ENCODE measurements at regions of chr17 and their contacts with region 1.

Region 1: DNA sequence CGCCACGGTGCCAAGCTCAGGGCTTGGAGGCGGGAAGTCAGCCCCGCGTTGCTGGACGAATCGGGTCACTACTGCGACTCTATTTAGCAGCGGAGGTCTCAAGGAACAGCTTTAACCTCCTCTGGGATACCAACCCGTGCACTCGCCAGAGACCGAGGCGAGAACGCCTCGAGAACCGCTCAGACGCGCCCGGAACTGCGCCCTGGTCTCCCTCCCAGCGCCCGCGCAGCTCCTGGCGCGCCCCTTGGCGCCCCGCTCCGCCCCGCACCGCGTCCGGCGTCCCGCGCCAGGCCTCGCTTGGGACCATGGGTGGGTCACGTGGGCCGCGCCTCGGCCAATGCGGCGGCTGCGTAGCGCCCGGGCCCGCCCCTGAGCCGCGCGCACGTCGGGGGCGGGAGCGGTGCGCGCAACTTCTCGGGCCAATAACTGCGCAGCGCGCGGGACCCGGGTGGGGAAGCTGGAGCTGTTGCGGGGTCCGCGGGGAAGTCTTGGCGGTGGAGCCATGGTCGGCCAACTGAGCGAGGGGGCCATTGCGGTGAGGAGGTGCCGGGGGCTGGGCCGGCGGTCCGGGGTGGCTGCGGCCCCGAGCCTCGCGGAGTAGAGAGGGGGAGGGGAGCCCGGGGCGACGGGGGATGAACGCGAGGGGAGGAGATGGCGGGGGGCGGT is at the starts of genes RPA1 and SMYD4:
- DNase-seq: peak; percentile 89
- H3K4me3 Mint-ChIP-seq: peak within 1 kb of the TSS; percentile 93
- H3K27ac Mint-ChIP-seq: peak within 1 kb of the TSS; percentile 85
- H3K4me1 Mint-ChIP-seq: peaks cover 61% of the 10 kb centered on the region
- H3K27me3 Mint-ChIP-seq: no peaks in the 10 kb centered on the region
- total RNA-seq, gene RPA1: 177 to 188 TPM
- total RNA-seq, gene SMYD4: 18.7 to 22.0 TPM

Region 2: DNA sequence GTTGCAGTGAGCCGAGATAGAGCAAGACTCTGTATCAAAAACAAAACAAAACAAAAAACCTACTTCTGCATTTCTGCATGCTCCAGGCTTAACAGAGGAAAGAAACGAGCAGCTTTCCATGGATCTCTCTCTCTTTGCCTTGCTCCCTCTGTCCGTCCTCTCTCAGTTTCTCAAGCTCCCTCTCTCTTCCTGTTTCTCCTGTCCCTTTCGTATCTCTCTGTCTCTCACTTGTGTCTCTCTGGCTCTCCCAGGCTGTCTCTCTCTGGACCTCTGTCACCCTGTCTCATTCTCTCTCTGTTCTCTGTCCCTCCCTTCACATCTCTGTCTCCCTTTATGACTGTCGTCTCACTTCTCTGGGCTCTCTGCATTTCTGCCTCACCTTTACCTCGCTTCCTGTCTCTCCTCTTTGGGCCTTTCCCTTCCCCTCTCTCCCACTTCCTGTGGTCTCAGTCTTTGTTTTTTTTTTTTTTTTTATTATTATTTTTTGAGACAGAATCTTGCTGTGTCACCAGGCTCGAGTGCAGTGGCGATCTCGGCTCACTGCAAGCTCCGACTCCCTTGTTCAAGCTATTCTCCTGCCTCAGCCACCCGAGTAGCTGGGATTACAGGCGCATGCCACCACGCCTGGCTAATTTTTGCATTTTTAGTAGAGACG is 263.1 kb before region 1 on chr17:
- CTCF ChIA-PET with region 1: no interaction called
- intact Hi-C with region 1: loop called (anchors 2 kb)
- DNase-seq: peak; percentile 74
- H3K4me3 Mint-ChIP-seq: peak overlapping the region; percentile 49
- H3K27ac Mint-ChIP-seq: peak overlapping the region; percentile 79
- H3K4me1 Mint-ChIP-seq: peaks cover 28% of the 10 kb centered on the region
- H3K27me3 Mint-ChIP-seq: no peaks in the 10 kb centered on the region

Region 3: GRCh38 chr17:1648963-1649843 is 180.5 kb before region 1 on chr17:
- CTCF ChIA-PET with region 1: no interaction called
- intact Hi-C with region 1: loop called (anchors 5 kb)
- DNase-seq: peak; percentile 94
- H3K4me3 Mint-ChIP-seq: peak overlapping the region; percentile 62
- H3K27ac Mint-ChIP-seq: no peak overlapping the region
- H3K4me1 Mint-ChIP-seq: peaks cover 40% of the 10 kb centered on the region
- H3K27me3 Mint-ChIP-seq: no peaks in the 10 kb centered on the region

Region 4: GRCh38 chr17:1870592-1870991 is 40.9 kb after region 1 on chr17:
- CTCF ChIA-PET with region 1: interaction called, 4 read pairs
- intact Hi-C with region 1: loop called (anchors 1 kb)
- DNase-seq: no peak
- H3K4me3 Mint-ChIP-seq: no peak overlapping the region
- H3K27ac Mint-ChIP-seq: peak overlapping the region; percentile 70
- H3K4me1 Mint-ChIP-seq: peaks cover 50% of the 10 kb centered on the region
- H3K27me3 Mint-ChIP-seq: no peaks in the 10 kb centered on the region

Measured in activated naive CD4-positive, alpha-beta T cell treated with anti-CD3 and anti-CD28 coated beads for 36 hours (primary cell).